ENCODE measurements at regions of chr19 and their contacts with region 1.

Region 1: GRCh38 chr19:16628183-16628983 is at the start of gene MED26:
- DNase-seq: peak; percentile 92 to 94 (median 93)
- H3K4me3 ChIP-seq: peak within 1 kb of the TSS; percentile 88 to 92 (median 89)
- H3K4me3 Mint-ChIP-seq: peak within 1 kb of the TSS; percentile 98
- H3K27ac ChIP-seq: peak within 1 kb of the TSS; percentile 67 to 90
- H3K27ac Mint-ChIP-seq: peak within 1 kb of the TSS; percentile 89 to 98 (median 95)
- H3K4me1 ChIP-seq: peaks cover 23 to 37% of the 10 kb centered on the region in 2 donors
- H3K4me1 Mint-ChIP-seq: peaks cover 32% of the 10 kb centered on the region
- H3K27me3 ChIP-seq: no peaks in the 10 kb centered on the region
- H3K27me3 Mint-ChIP-seq: peaks cover 0 to 1% (median 0%) of the 10 kb centered on the region in 3 donors
- CTCF ChIP-seq: no peak
- polyA plus RNA-seq, gene MED26: 1.1 to 7.1 (median 2.1) TPM

Region 2: DNA sequence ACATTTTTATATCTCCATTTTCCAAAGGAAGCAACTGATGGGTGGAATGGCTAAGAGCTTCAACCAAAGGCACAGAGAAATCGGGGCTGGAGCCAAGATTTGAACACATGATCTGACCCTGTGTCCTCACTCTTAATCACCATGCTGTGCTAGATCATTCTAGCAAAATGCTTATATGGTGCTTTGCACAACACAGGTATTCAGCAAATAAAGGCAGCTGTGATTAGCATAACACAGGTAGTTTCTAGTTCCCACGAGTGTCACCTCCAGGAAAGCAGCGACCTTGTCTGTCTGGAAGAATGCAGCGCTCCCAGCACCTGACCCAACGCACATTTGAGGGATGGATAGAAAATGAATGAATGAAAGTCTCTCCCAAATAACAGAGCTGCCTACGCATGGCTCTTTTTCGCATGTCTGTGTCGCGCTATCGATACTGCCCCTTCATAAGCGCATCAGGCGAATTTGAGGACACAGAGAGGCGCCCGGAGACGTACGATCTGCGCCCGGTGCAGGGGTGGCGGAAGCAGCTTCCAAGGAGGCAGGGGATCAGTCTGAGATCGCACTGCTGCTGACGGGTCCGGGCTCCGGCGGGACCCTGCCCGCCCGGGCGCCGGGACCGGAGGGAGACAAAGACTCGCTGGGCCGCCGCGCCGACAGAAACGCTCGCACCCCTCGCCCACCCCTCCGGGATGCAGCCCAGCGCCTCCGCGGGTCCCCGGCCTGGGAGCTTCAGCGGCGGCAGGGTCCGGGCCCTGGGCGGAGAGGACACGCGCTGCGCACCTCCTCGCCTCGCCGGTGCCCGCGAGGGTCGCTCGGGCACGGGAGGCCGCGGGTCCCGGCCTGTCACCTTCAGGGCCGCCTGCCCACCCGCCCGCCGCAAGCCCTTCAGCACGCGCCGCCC is 157.2 kb before region 1 on chr19:
- intact Hi-C with region 1: no loop called
- DNase-seq: peak in 1 of 3 donors; percentile 16
- H3K4me3 ChIP-seq: peak overlapping the region; percentile 58 to 89 (median 67)
- H3K4me3 Mint-ChIP-seq: peak overlapping the region; percentile 85 to 92
- H3K27ac ChIP-seq: peak overlapping the region in 1 of 2 donors; percentile 59
- H3K27ac Mint-ChIP-seq: peak overlapping the region in 5 of 7 donors; percentile 62 to 82 (median 71)
- H3K4me1 ChIP-seq: peaks cover 22 to 30% of the 10 kb centered on the region in 2 donors
- H3K4me1 Mint-ChIP-seq: peaks cover 31% of the 10 kb centered on the region
- H3K27me3 ChIP-seq: no peaks in the 10 kb centered on the region
- H3K27me3 Mint-ChIP-seq: peaks cover 0 to 2% (median 0%) of the 10 kb centered on the region in 3 donors
- CTCF ChIP-seq: no peak

Region 3: DNA sequence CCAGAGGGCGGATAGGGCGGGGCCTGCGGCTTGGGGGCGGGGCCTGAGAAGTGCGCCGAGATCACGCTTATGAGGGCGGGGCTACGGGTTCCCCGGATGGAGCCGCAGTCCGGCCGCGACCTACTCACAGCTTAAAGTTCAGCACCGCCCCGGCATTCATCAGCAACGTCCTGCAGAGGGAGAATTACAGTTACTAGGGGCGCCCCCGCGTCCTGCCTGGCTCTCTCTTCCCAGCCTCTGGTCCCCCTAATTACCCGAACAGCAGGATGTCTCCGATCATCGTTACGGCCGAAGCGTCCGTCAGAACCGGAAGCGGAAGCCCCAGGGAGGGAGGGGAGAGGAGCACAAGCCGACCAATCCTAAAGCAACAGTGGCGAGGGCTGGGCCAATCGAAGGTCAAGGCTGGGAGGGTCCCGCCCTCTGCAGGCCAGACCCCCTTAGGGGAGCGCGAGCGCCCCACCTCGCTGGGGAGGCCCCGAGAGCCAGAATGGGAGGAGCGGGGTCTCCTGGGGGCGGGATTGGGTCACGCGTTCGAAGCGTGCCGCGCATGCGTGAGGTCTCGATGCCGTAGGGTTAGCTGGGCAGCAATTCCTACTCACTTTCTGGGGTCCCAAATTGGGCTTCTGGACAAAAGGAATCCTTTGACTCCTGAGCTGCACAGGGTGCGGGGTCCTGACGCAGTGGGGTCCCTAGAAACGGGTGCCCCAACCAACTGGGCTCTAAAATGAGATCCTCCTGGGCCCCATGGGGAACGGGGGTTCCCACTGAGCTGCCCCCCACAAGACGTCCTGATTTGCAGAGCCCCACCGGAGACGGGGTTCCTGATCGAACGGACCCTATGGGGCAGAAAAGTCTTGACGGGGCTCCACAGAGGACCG is 31.7 kb after region 1 on chr19 and contains the start of gene SMIM7:
- intact Hi-C with region 1: loop called (anchors 2 to 5 kb)
- DNase-seq: peak; percentile 98 to 99 (median 98)
- H3K4me3 ChIP-seq: peak within 1 kb of the TSS; percentile 81 to 92 (median 90)
- H3K4me3 Mint-ChIP-seq: peak within 1 kb of the TSS; percentile 96 to 97
- H3K27ac ChIP-seq: peak within 1 kb of the TSS; percentile 79 to 86
- H3K27ac Mint-ChIP-seq: peak within 1 kb of the TSS; percentile 94 to 99 (median 98)
- H3K4me1 ChIP-seq: peaks cover 37 to 59% of the 10 kb centered on the region in 2 donors
- H3K4me1 Mint-ChIP-seq: peaks cover 50% of the 10 kb centered on the region
- H3K27me3 ChIP-seq: peaks cover 0 to 7% of the 10 kb centered on the region in 2 donors
- H3K27me3 Mint-ChIP-seq: peaks cover 5 to 20% (median 15%) of the 10 kb centered on the region in 3 donors
- CTCF ChIP-seq: no peak
- polyA plus RNA-seq, gene SMIM7: 65.5 to 91.7 (median 86.7) TPM